ENCODE measurements at regions of chr7 and their contacts with region 1.

Region 1: GRCh38 chr7:51224811-51225612 is 91.6 kb downstream of the COBL start:
- DNase-seq: peak; percentile 79
- H3K4me3 Mint-ChIP-seq: no peak overlapping the region
- H3K27ac Mint-ChIP-seq: peak overlapping the region; percentile 5
- H3K4me1 Mint-ChIP-seq: peaks cover 26% of the 10 kb centered on the region
- H3K27me3 Mint-ChIP-seq: peaks cover 2% of the 10 kb centered on the region
- CTCF ChIP-seq: peak; percentile 47

Region 2: GRCh38 chr7:51151455-51151854 is 73.6 kb before region 1 on chr7:
- CTCF ChIA-PET with region 1: no interaction called
- POLR2A ChIA-PET with region 1: no interaction called
- intact Hi-C with region 1: no loop called
- DNase-seq: no peak
- H3K4me3 Mint-ChIP-seq: no peak overlapping the region
- H3K27ac Mint-ChIP-seq: no peak overlapping the region
- H3K4me1 Mint-ChIP-seq: no peaks in the 10 kb centered on the region
- H3K27me3 Mint-ChIP-seq: no peaks in the 10 kb centered on the region
- CTCF ChIP-seq: no peak

Region 3: GRCh38 chr7:51242007-51242691 is 17.1 kb after region 1 on chr7:
- CTCF ChIA-PET with region 1: interaction called, 13 read pairs
- POLR2A ChIA-PET with region 1: interaction called, 3 read pairs
- intact Hi-C with region 1: no loop called
- DNase-seq: peak; percentile 34
- H3K4me3 Mint-ChIP-seq: no peak overlapping the region
- H3K27ac Mint-ChIP-seq: no peak overlapping the region
- H3K4me1 Mint-ChIP-seq: no peaks in the 10 kb centered on the region
- H3K27me3 Mint-ChIP-seq: no peaks in the 10 kb centered on the region
- CTCF ChIP-seq: no peak

Region 4: DNA sequence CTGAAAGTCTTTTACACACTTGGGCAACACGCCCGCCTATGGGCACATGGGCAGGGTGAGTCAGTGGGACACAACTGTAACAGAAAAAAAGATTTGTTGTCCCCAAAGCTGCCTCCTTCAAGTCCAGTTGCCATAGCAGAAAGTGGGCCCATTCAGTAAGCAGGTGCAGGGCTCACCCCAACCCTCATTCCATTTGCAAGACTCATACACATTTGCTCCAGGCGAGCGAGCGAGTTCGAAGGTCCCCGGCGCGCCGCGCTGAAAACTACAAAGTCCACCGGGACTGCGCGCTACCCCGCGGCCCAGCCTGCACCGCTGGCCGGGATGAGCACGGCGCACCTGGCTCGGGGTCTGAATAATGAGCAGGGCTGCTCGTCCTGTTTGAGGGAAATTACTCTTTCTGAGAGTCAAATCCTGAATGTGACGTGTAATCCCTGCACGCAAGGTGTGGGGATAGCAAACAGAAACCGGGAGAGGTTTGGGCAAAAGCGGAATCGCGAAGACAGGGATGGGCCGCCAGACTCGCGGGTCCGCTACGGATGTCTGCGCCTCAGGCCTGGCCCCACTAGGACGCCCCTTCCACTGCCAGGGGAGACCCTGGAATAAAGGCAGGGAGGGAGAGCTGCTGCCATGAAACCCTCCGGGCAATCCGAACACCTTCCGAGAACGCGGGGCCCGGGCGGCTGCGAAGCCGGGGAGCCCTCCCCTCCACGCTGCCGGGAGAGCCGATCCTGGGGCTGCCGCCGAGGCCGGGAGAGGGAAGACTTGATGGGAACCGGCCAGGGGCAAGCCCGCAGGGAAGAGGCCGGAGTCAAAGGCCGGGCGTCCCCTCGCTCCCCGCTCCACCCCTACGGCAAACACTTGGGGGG is 90.6 kb after region 1 on chr7:
- CTCF ChIA-PET with region 1: interaction called, 3 read pairs
- POLR2A ChIA-PET with region 1: interaction called, 5 read pairs
- intact Hi-C with region 1: loop called (anchors 1 kb)
- DNase-seq: peak; percentile 67
- H3K4me3 Mint-ChIP-seq: peak overlapping the region; percentile 85
- H3K27ac Mint-ChIP-seq: peak overlapping the region; percentile 92
- H3K4me1 Mint-ChIP-seq: peaks cover 11% of the 10 kb centered on the region
- H3K27me3 Mint-ChIP-seq: no peaks in the 10 kb centered on the region
- CTCF ChIP-seq: no peak

Region 5: DNA sequence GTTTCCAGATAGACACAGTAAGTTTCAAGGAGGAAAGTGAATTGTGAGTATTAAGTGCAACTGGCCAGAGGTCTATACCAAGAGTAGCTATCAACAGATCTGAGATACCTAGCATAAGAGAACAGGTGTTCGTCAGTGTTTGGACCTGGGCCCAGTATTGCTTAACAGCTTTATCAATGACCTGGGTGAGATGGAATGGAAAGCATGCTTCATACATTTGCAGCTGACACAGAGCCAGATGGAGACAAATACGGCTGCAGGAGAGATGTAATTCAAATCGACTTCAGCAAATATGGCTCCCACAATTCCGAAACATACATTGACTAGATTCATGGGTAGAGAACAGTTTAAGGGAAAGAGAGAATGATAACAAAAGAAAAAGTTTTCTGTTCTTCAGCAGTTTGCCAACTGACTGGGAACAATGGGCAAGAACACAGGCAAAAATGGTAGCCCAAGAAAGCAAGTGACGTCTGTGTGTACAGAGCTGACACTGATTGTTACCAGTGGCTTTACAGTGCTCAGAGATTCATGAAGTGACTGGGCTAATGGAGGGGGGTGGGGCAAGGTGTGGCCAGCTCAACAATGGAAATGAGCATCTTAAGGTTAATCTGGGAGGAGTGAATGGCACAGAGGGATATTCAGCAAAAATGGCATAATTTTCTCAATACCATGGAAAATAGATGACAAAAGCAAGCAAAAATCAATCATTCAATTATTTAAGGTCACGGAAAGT is 119.6 kb after region 1 on chr7:
- CTCF ChIA-PET with region 1: interaction called, 24 read pairs
- POLR2A ChIA-PET with region 1: interaction called, 5 read pairs
- intact Hi-C with region 1: no loop called
- DNase-seq: peak; percentile 73
- H3K4me3 Mint-ChIP-seq: no peak overlapping the region
- H3K27ac Mint-ChIP-seq: no peak overlapping the region
- H3K4me1 Mint-ChIP-seq: peaks cover 16% of the 10 kb centered on the region
- H3K27me3 Mint-ChIP-seq: no peaks in the 10 kb centered on the region
- CTCF ChIP-seq: no peak

Region 6: DNA sequence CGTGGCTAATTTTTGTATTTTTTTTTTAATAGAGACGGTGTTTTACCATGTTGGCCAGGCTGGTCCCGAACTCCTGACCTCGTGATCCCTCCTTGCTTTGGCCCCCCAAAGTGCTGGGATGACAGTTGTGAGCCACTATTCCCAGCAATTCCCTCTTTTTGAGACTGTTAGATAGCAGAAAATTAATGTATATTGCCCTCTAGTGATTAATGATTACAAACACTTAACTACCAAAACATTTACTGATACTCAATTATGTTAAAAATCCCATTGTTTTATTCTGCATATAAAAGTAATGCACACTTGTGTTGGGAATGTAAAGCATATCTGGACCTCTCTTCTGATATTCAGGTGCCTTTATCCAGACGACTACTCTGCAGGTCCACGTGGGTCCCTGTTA is 132.8 kb after region 1 on chr7:
- CTCF ChIA-PET with region 1: interaction called, 137 read pairs
- POLR2A ChIA-PET with region 1: interaction called, 4 read pairs
- intact Hi-C with region 1: loop called (anchors 1 kb)
- DNase-seq: no peak
- H3K4me3 Mint-ChIP-seq: no peak overlapping the region
- H3K27ac Mint-ChIP-seq: no peak overlapping the region
- H3K4me1 Mint-ChIP-seq: no peaks in the 10 kb centered on the region
- H3K27me3 Mint-ChIP-seq: peaks cover 10% of the 10 kb centered on the region
- CTCF ChIP-seq: peak; percentile 25

Measured in MCF 10A (cell line).